Heart right ventricle (tissue), 16 donors: ENCODE measurements at regions of chr18 and their contacts with region 1.

Region 1: GRCh38 chr18:47150029-47150823 is at the start of gene HDHD2:
- DNase-seq: peak; percentile 85 to 91
- ATAC-seq: peak; percentile 96 to 98 (median 97)
- H3K4me3 ChIP-seq: peak within 1 kb of the TSS; percentile 50 to 82 (median 74)
- H3K27ac ChIP-seq: peak within 1 kb of the TSS; percentile 69 to 97 (median 94)
- H3K4me1 ChIP-seq: peaks cover 2 to 46% (median 23%) of the 10 kb centered on the region in 9 donors
- H3K27me3 ChIP-seq: no peaks in the 10 kb centered on the region
- CTCF ChIP-seq: peak in 1 of 9 donors; percentile 22
- total RNA-seq, gene HDHD2: 31.1 to 52.4 (median 38.9) TPM

Region 2: DNA sequence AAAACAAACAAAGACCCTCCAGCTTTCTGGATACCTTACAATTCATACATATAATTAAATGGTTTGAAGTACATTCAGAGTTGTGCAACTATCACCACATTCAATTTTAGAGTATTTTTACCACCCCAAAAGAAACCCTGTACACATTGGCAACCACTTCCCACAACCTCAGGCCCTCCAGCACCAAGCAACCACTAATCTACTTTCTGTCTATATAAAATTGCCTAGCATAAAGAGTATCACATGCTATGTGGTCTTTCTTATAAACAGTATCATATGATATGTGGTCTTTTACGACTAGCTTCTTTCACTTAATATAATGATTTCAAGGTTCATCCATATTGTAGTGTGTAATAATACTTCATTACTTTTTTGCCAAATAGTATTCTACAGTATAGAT is 18.7 kb after region 1 on chr18:
- intact Hi-C with region 1: loop called in 1 of 10 experiments (anchors 2 kb)
- DNase-seq: no peak
- ATAC-seq: no peak
- H3K4me3 ChIP-seq: no peak overlapping the region
- H3K27ac ChIP-seq: no peak overlapping the region
- H3K4me1 ChIP-seq: peaks cover 0 to 56% (median 18%) of the 10 kb centered on the region in 9 donors
- H3K27me3 ChIP-seq: no peaks in the 10 kb centered on the region
- CTCF ChIP-seq: no peak

Region 3: DNA sequence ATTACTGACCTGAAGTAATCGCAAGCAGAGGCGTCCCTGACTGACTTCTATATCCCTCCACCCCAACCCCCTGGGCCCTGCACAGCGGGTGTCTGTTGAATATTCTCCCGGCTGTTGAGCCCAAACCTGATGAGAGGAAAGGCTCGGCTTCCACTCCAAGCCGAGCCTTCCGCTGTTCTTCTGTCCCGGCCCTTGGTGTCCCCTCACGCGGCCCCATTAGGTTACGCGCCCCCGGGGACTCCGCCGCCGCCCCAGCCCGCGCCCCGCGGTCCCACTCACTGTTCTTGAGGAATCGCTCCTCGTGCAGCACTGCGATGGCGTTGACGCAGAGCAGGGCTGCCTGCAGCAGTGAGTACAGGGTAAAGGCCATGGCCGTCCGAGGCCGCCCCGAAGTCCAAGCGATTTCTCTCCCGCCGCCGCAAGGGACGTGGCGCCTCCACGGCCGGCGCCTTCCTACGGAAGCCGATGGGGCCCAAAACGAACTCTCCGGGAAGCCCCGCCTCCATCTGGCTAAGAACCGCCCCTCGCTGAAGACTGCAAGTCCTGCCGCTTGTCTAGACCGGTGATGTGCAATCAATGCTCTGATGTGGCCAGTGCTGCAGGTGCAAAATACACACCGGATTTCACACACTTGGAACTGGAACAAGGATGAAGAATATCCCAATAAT is 25.8 kb after region 1 on chr18 and contains the start of gene IER3IP1:
- intact Hi-C with region 1: loop called in 2 of 10 experiments (anchors 1 to 2 kb)
- DNase-seq: peak; percentile 92 to 95
- ATAC-seq: peak; percentile 97 to 99 (median 98)
- H3K4me3 ChIP-seq: peak within 1 kb of the TSS; percentile 69 to 100 (median 99)
- H3K27ac ChIP-seq: peak within 1 kb of the TSS; percentile 60 to 95 (median 89)
- H3K4me1 ChIP-seq: peaks cover 5 to 43% (median 33%) of the 10 kb centered on the region in 9 donors
- H3K27me3 ChIP-seq: no peaks in the 10 kb centered on the region
- CTCF ChIP-seq: peak in 5 of 9 donors; percentile 14 to 44 (median 33)
- total RNA-seq, gene IER3IP1: 8.5 to 12.7 (median 10.1) TPM